Posterior vena cava (tissue), 2 donors: ENCODE measurements at regions of chr5 and their contacts with region 1.

Region 1: GRCh38 chr5:38434966-38435705 is 121.3 kb downstream of the LIFR start:
- DNase-seq: no peak

Region 2: DNA sequence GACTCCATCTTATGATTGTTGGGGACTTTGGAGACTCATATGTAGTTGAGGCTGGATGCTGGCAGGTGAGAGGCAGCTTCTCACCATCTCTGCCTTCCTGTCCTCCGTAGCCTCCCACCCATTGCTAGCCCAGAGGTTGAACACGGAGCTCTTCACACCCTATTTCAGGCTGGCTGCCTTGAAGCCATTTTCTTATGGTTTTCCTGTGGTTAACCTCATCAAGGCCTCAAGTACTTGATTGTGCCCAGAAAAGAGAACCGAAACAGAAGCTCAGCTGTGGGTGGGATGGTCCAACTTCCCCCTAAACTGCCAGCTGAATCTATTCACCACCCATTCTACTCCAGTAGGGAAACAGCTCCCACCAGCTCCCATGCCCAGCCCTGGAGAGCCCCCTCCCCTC is 18.4 kb after region 1 on chr5:
- intact Hi-C with region 1: no loop called
- DNase-seq: no peak

Region 3: DNA sequence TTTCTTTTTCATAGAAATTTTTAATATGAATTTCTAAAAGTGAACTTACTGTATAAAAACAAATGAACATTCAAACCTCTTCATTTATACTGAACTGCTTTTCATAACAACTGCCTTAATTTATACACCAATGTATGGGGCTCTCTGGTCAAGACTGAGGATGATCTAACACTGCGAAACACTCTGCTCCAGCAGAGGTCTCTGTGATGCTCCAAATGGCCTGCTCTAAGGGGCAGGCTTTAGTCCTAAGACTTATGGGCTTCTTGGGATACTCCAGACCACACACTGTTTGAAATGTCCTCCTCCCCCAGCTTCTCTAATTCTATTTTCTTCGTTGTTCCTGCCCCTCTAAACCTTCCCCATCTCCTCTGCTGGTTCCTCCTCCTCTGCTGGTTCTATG is 62.8 kb after region 1 on chr5:
- intact Hi-C with region 1: no loop called
- DNase-seq: no peak

Region 4: DNA sequence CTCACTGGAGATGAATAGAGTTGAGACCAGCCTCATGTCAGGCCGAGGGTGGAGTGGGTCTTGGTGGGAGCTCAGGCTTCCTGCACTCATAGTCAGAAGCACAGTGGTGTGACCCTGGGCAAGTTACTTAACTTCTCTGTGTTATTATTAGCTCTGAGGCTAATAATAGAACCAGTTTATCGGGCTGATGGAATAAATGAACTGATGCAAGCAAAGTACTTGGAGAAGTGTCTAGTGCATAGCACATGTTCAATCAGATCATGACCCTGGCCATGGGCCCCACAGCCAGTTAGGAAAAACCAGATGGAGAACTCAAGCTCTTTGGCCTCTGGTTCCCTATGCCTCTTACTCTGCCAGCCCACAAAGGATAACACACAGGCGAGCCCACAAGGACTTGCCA is 365.4 kb after region 1 on chr5:
- intact Hi-C with region 1: loop called in 1 of 2 experiments (anchors 5 kb)
- DNase-seq: no peak

Region 5: DNA sequence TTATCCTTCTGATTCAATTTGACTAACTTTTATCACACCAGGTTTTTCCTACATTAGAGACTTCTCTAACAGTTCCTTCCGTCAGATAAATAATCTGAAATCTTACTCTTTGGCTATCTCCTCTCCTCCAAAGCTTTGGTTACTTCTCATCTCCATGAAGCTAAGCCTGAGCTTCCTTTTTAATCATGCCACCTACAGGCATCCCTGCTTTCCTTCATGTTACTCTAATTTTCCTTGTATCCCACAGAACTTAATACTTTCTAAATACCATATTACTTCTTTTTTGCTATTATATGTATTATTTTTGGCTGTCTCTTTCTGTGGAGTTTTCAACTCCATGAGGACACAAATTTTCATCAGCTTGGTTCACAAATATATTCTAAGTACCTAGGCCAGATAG is 879.5 kb after region 1 on chr5:
- intact Hi-C with region 1: no loop called
- DNase-seq: no peak